Upper lobe of right lung (tissue), 1 donor: ENCODE measurements at regions of chr15 and their contacts with region 1.

Region 1: DNA sequence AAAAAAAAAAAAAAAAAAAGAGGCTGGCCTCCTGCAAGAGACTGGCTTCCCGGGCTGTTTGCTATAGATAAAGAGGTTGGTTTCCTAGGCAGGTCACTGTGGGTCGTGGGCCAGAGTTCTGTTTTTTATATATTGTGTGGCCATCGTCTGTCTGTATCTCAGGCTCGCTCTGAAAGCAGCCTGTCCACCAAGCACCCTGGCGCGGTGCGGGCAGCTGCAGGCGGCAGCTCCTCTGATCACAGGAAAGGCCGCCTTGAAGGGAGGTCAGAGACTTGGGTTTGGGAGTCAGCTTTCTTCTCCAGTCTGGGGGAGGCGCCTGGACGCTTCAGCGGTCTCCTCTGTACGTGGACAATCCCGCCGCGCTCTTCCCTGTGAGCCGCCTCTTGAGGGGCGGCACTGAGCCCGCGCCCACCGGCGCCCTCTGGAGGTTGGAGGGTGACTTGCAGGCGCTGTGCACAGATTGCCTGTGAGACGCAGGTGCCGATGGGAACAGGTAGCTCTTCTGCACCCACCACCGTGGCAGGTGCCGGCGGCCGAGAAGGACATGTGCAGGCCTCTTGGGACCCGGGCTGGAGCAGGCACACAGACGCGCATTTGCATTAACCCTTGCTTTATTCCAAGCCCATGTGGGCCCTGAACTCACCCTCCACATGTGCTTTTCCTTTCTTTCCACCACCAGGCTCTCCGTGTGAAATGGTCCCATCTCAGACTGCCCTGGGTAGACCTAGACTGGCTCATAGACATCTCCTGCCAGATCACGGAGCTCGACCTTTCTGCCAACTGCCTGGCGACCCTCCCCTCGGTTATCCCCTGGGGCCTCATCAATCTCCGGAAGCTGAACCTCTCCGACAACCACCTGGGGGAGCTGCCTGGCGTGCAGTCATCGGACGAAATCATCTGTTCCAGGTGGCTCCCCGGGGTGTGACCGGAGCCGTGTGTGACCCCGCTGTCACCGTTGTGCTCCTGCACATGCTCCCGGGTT is 89.3 kb downstream of the LRRK1 start:
- DNase-seq: peak; percentile 93
- ATAC-seq: peak; percentile 97
- H3K4me3 ChIP-seq: peak overlapping the region; percentile 56
- H3K27ac ChIP-seq: no peak overlapping the region
- H3K4me1 ChIP-seq: peaks cover 16% of the 10 kb centered on the region
- H3K27me3 ChIP-seq: no peaks in the 10 kb centered on the region
- CTCF ChIP-seq: peak; percentile 98

Region 2: GRCh38 chr15:100627789-100628395 is 380.6 kb before region 1 on chr15:
- intact Hi-C with region 1: loop called (anchors 5 kb)
- DNase-seq: no peak
- ATAC-seq: peak; percentile 96
- H3K4me3 ChIP-seq: no peak overlapping the region
- H3K27ac ChIP-seq: no peak overlapping the region
- H3K4me1 ChIP-seq: no peaks in the 10 kb centered on the region
- H3K27me3 ChIP-seq: no peaks in the 10 kb centered on the region
- CTCF ChIP-seq: peak; percentile 91